Activated T-helper 2 cell treated with anti-CD3 and anti-CD28 coated beads, Interferon-gamma antibody, Interleukin-2, Interleukin-4, amounts not matched to agents 10 μg/mL and 5 μg/mL and 100 μg/mL, durations not matched to agents 14 hours and 24 hours and 36 hours (primary cell): ENCODE measurements at regions of chr19 and their contacts with region 1.

Region 1: GRCh38 chr19:52734893-52735661 is at the start of gene ZNF611:
- DNase-seq: peak; percentile 97
- H3K4me3 Mint-ChIP-seq: peak within 1 kb of the TSS; percentile 89
- H3K27ac Mint-ChIP-seq: peak within 1 kb of the TSS; percentile 81
- H3K4me1 Mint-ChIP-seq: peaks cover 19% of the 10 kb centered on the region
- H3K27me3 Mint-ChIP-seq: no peaks in the 10 kb centered on the region
- total RNA-seq, gene ZNF611: 15.6 and 17.3 TPM in 2 replicates

Region 2: DNA sequence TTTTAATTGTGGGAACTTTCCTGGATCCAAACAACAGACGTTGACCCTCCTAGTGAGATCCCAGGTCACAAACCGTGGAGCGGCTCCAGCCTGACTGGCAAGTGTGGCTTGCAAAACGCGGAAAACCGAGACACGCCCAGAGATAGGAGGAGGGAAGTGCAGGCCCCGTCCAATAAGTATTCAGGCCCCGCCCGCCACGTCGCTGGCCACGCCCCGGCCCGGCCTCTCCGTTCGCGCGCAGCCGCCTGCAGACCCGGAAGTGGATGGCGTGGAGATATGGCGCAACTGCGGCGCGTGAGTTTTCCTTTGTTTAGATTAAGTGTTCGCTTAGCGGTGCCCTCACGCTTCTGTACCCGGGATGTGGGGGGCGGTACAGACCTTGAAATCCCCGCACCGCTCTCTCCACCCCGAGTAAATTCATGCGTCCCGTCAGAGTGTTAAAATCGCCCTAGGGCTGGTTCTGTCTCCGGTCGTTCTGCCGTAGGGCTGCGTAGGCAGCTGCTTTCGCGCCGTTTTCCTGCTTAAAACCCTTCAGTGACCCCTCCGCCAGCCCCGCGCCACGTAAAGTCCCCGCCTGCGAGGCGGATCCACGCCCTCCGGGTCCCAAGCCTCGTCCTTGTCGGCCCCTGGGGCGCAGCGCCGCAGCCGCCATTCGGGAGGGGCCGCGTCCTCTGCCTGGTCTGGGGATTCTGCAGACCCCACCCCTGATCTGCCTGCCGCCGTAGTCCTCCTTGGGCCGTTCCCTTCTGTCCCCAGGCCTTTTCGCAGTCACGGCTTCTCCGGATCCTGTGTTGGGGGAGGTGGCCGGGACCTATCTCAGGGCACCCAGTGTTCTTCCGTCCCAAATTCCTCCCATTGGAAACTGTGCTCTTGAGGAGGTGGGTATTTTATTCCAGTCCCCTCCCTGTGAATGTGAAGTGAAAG is 465.5 kb before region 1 on chr19 and contains the start of gene ZNF766:
- intact Hi-C with region 1: loop called (anchors 10 kb)
- DNase-seq: peak; percentile 95
- H3K4me3 Mint-ChIP-seq: peak within 1 kb of the TSS; percentile 98
- H3K27ac Mint-ChIP-seq: peak within 1 kb of the TSS; percentile 95
- H3K4me1 Mint-ChIP-seq: peaks cover 11% of the 10 kb centered on the region
- H3K27me3 Mint-ChIP-seq: no peaks in the 10 kb centered on the region
- total RNA-seq, gene ZNF766: 15.9 and 18.2 TPM in 2 replicates

Region 3: GRCh38 chr19:52690369-52691214 is 44.5 kb before region 1 on chr19:
- intact Hi-C with region 1: loop called (anchors 2 kb)
- DNase-seq: peak; percentile 86
- H3K4me3 Mint-ChIP-seq: peak overlapping the region; percentile 95
- H3K27ac Mint-ChIP-seq: peak overlapping the region; percentile 94
- H3K4me1 Mint-ChIP-seq: peaks cover 22% of the 10 kb centered on the region
- H3K27me3 Mint-ChIP-seq: no peaks in the 10 kb centered on the region

Region 4: GRCh38 chr19:52786457-52787359 is 51.6 kb after region 1 on chr19 and contains the start of gene ZNF600:
- intact Hi-C with region 1: loop called (anchors 1 kb)
- DNase-seq: peak; percentile 57
- H3K4me3 Mint-ChIP-seq: peak within 1 kb of the TSS; percentile 85
- H3K27ac Mint-ChIP-seq: peak within 1 kb of the TSS; percentile 50
- H3K4me1 Mint-ChIP-seq: peaks cover 22% of the 10 kb centered on the region
- H3K27me3 Mint-ChIP-seq: no peaks in the 10 kb centered on the region
- total RNA-seq, gene ZNF600: 7.9 and 11.3 TPM in 2 replicates

Region 5: GRCh38 chr19:53333463-53334449 is 598.7 kb after region 1 on chr19 and contains the start of gene ZNF845:
- intact Hi-C with region 1: loop called (anchors 10 kb)
- DNase-seq: peak; percentile 95
- H3K4me3 Mint-ChIP-seq: peak within 1 kb of the TSS; percentile 89
- H3K27ac Mint-ChIP-seq: peak within 1 kb of the TSS; percentile 87
- H3K4me1 Mint-ChIP-seq: peaks cover 5% of the 10 kb centered on the region
- H3K27me3 Mint-ChIP-seq: no peaks in the 10 kb centered on the region
- total RNA-seq, gene ZNF845: 5.6 and 5.9 TPM in 2 replicates